A673 (cell line): ENCODE measurements at regions of chr7 and their contacts with region 1.

Region 1: DNA sequence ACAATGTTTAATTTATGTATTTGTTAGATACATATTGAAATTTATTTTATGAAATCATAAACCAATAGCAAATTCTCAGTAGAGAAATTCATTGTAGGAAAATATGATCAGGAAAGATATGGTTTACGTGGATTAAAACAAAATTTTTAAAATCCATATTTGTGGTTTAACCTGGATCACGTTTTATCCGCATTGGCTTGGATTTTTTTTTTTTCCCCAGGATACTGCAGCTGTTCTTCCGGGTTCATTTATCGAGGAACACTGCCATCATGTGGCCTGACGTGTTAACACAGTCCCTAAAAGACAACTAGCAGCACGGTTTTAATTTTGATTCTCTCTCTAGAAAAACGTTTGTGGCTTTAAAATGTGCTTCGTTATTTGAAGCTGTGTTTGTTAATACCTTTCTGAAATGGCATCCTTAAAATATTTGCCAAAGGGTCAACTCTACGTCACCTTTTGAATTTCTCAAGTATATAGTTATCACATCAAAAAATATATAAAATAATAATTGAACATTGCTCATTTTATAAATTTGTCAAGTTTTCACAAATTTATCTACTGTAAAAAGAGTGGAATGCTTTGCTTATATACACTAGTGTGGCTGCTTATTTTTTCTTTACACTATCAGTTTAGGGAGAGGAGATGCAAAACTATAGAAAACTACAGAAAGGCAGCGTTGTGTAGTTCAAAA is 8.7 kb upstream of the ASB4 start:
- DNase-seq: peak; percentile 85
- H3K4me3 ChIP-seq: no peak overlapping the region
- H3K27ac ChIP-seq: peak overlapping the region; percentile 9
- H3K4me1 ChIP-seq: peaks cover 28% of the 10 kb centered on the region
- H3K27me3 ChIP-seq: no peaks in the 10 kb centered on the region
- CTCF ChIP-seq: peak; percentile 85

Region 2: DNA sequence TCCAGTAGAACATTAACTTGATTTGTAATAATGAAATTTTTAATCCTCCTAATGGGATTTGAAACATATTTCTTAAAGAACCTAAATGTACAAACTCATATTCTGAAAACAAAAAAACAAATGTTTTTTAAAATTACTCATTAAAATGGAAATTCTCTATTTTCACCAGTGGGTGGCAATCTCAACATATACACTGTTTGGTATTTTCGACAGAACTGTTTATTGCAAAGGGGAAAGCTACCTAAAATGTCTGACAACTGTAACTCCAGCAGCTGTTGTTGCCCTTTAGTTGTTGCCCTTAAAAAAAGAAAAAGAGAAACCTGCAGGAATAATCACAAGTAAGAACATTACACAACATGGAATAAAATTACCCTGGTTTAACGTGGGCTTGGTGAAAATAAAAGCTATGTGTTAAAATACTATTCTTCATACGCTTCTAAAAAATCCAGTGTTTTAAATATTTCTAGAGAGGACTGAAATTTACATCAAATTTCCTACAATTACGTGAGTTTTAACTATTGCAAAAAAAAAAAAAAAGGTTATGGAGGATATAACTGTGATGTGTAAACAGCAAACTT is 1027.8 kb before region 1 on chr7:
- CTCF ChIA-PET with region 1: interaction called, 9 read pairs
- POLR2A ChIA-PET with region 1: no interaction called
- intact Hi-C with region 1: loop called (anchors 1 kb)
- DNase-seq: peak; percentile 71
- H3K4me3 ChIP-seq: no peak overlapping the region
- H3K27ac ChIP-seq: no peak overlapping the region
- H3K4me1 ChIP-seq: peaks cover 15% of the 10 kb centered on the region
- H3K27me3 ChIP-seq: no peaks in the 10 kb centered on the region
- CTCF ChIP-seq: peak; percentile 75

Region 3: GRCh38 chr7:95052566-95053094 is 424.4 kb before region 1 on chr7:
- CTCF ChIA-PET with region 1: no interaction called
- POLR2A ChIA-PET with region 1: no interaction called
- intact Hi-C with region 1: loop called (anchors 2 kb)
- DNase-seq: no peak
- H3K4me3 ChIP-seq: no peak overlapping the region
- H3K27ac ChIP-seq: no peak overlapping the region
- H3K4me1 ChIP-seq: peaks cover 7% of the 10 kb centered on the region
- H3K27me3 ChIP-seq: no peaks in the 10 kb centered on the region
- CTCF ChIP-seq: no peak

Region 4: DNA sequence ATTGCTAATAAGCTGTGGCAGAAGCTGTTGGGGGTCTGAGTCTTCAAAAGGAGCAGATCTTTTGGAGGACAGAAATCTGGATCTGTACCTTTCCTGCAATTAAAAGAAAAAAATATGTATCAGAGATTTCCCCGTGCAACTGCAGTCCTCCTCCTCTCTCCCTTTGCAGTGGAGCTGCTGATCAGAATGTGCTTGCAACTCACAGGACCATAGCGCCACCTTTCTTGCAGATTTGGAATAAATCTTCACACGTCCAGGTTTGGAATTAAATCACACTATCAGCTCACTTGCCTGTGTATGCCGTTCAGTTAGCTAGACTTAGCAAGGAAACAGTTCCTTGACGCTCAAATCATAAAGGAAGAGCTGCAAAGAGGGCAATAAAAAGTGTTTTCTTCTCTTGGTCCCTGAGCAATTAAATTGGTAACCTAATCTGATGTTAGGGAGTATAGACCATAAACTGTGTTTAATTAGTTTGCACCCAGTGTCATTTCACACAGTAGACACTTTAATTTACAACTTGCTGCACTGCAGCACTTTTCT is 230.1 kb before region 1 on chr7:
- CTCF ChIA-PET with region 1: interaction called, 7 read pairs
- POLR2A ChIA-PET with region 1: interaction called, 3 read pairs
- intact Hi-C with region 1: loop called (anchors 5 kb)
- DNase-seq: peak; percentile 87
- H3K4me3 ChIP-seq: no peak overlapping the region
- H3K27ac ChIP-seq: no peak overlapping the region
- H3K4me1 ChIP-seq: peaks cover 5% of the 10 kb centered on the region
- H3K27me3 ChIP-seq: no peaks in the 10 kb centered on the region
- CTCF ChIP-seq: peak; percentile 89

Region 5: DNA sequence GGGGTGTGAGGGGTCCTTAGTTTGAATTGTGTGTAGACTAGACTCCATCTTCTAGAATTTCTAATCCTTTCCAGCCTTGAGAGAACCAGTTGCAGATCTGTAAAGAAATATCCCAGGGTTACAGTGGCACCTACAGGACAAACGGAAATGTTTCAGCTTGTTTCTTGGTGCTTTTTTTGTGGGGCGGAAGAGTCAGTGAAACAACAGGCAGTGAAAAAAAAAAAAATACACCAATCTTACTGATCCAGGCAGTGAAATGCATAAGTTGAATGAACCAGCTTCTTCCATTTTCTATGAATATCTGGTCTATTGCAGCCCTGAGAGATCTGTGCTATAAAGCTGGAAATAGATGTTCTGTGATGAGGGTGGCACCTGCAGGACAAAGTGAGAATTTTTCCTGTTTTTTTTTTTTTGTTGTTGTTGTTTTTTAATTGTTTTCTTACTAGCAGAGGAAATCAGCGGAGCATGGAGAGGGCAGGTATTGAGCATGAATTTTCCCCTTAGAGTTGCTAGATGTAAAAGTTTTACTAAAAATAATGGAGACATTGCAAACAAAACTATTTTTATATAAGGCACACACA is 213.4 kb after region 1 on chr7:
- CTCF ChIA-PET with region 1: interaction called, 14 read pairs
- POLR2A ChIA-PET with region 1: no interaction called
- intact Hi-C with region 1: no loop called
- DNase-seq: peak; percentile 70
- H3K4me3 ChIP-seq: no peak overlapping the region
- H3K27ac ChIP-seq: no peak overlapping the region
- H3K4me1 ChIP-seq: no peaks in the 10 kb centered on the region
- H3K27me3 ChIP-seq: no peaks in the 10 kb centered on the region
- CTCF ChIP-seq: peak; percentile 73